Naive thymus-derived CD4-positive, alpha-beta T cell (primary cell): ENCODE measurements at regions of chr1 and their contacts with region 1.

Region 1: GRCh38 chr1:154791292-154792166 is 78.6 kb downstream of the KCNN3 start:
- DNase-seq: peak; percentile 46 to 94 (median 91)
- ATAC-seq: peak; percentile 99
- H3K4me3 ChIP-seq: peak overlapping the region; percentile 6
- H3K4me3 Mint-ChIP-seq: peak overlapping the region; percentile 63 to 83 (median 78)
- H3K27ac ChIP-seq: peak overlapping the region; percentile 38
- H3K27ac Mint-ChIP-seq: peak overlapping the region; percentile 59 to 95 (median 84)
- H3K4me1 ChIP-seq: peaks cover 22 to 23% of the 10 kb centered on the region in 2 donors
- H3K4me1 Mint-ChIP-seq: peaks cover 18 to 56% (median 40%) of the 10 kb centered on the region in 7 donors
- H3K27me3 ChIP-seq: no peaks in the 10 kb centered on the region
- H3K27me3 Mint-ChIP-seq: peaks cover 0 to 23% (median 0%) of the 10 kb centered on the region in 5 donors

Region 2: DNA sequence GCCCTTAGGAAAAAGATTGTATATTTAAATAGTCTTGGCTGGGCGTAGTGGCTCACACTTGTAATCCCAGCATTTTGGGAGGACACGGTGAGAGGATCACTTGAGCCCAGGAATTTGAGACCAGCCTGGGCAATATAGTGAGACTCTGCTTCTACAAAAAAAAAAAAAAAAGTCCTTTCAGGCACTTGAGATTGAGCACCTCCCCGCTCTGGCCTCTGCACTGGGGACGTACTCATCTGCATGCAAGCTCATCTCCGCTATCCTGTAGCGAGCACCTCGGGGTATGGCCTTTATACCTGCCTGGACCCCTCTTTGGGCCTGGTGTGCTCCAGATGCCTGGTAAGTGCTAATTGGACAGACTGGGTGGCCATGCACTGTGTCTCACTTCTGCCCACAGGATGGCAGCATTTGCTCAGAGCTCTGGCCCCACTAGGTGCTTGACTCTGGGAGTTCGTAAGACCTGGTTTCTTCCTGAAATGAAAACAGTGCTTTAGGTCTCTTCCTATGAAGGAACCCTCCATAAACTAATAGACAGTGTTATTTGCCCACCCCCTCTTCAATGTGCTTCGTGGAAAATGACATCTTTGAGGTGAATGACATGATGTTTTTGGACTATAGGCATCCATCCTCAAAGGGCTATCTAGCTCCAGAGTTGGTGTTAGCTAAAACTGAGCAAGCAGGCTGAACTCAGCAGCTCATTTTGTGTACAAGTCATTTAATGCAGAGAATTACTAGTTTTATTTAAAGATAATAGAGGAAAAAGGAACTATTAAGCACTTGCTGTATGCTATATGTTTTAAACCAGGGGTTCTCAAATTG is 121.9 kb before region 1 on chr1:
- CTCF ChIA-PET with region 1: interaction called, 19 read pairs
- POLR2A ChIA-PET with region 1: no interaction called
- intact Hi-C with region 1: loop called (anchors 1 kb)
- DNase-seq: peak; percentile 40 to 81 (median 73)
- ATAC-seq: peak; percentile 100
- H3K4me3 ChIP-seq: no peak overlapping the region
- H3K4me3 Mint-ChIP-seq: no peak overlapping the region
- H3K27ac ChIP-seq: no peak overlapping the region
- H3K27ac Mint-ChIP-seq: peak overlapping the region in 1 of 9 donors; percentile 30
- H3K4me1 ChIP-seq: no peaks in the 10 kb centered on the region
- H3K4me1 Mint-ChIP-seq: peaks cover 0 to 13% (median 5%) of the 10 kb centered on the region in 7 donors
- H3K27me3 ChIP-seq: no peaks in the 10 kb centered on the region
- H3K27me3 Mint-ChIP-seq: peaks cover 0 to 4% (median 0%) of the 10 kb centered on the region in 5 donors

Region 3: GRCh38 chr1:154760469-154760933 is 31.0 kb before region 1 on chr1:
- CTCF ChIA-PET with region 1: interaction called, 27 read pairs
- POLR2A ChIA-PET with region 1: interaction called, 6 read pairs
- intact Hi-C with region 1: loop called (anchors 1 kb)
- DNase-seq: peak; percentile 73 to 91 (median 83)
- ATAC-seq: peak; percentile 98
- H3K4me3 ChIP-seq: peak overlapping the region; percentile 47
- H3K4me3 Mint-ChIP-seq: peak overlapping the region; percentile 29 to 79 (median 74)
- H3K27ac ChIP-seq: peak overlapping the region; percentile 59
- H3K27ac Mint-ChIP-seq: peak overlapping the region in 5 of 9 donors; percentile 62 to 97 (median 79)
- H3K4me1 ChIP-seq: peaks cover 8 to 24% of the 10 kb centered on the region in 2 donors
- H3K4me1 Mint-ChIP-seq: peaks cover 24 to 47% (median 40%) of the 10 kb centered on the region in 7 donors
- H3K27me3 ChIP-seq: peaks cover 0 to 8% of the 10 kb centered on the region in 2 donors
- H3K27me3 Mint-ChIP-seq: peaks cover 0 to 23% (median 5%) of the 10 kb centered on the region in 5 donors

Region 4: GRCh38 chr1:154772606-154773506 is 18.7 kb before region 1 on chr1:
- CTCF ChIA-PET with region 1: interaction called, 13 read pairs
- POLR2A ChIA-PET with region 1: interaction called, 5 read pairs
- intact Hi-C with region 1: loop called in 1 of 2 experiments (anchors 1 kb)
- DNase-seq: peak in 2 of 9 donors; percentile 19 to 36
- ATAC-seq: no peak
- H3K4me3 ChIP-seq: no peak overlapping the region
- H3K4me3 Mint-ChIP-seq: no peak overlapping the region
- H3K27ac ChIP-seq: no peak overlapping the region
- H3K27ac Mint-ChIP-seq: peak overlapping the region in 1 of 9 donors; percentile 70
- H3K4me1 ChIP-seq: no peaks in the 10 kb centered on the region
- H3K4me1 Mint-ChIP-seq: peaks cover 0 to 7% (median 0%) of the 10 kb centered on the region in 7 donors
- H3K27me3 ChIP-seq: no peaks in the 10 kb centered on the region
- H3K27me3 Mint-ChIP-seq: peaks cover 0 to 3% (median 0%) of the 10 kb centered on the region in 5 donors

Region 5: GRCh38 chr1:154878371-154879022 is 87.0 kb after region 1 on chr1:
- CTCF ChIA-PET with region 1: interaction called, 5 read pairs
- POLR2A ChIA-PET with region 1: interaction called, 3 read pairs
- intact Hi-C with region 1: loop called in 1 of 2 experiments (anchors 1 kb)
- DNase-seq: peak; percentile 43 to 73 (median 60)
- ATAC-seq: peak; percentile 94
- H3K4me3 ChIP-seq: no peak overlapping the region
- H3K4me3 Mint-ChIP-seq: no peak overlapping the region
- H3K27ac ChIP-seq: no peak overlapping the region
- H3K27ac Mint-ChIP-seq: peak overlapping the region in 1 of 9 donors; percentile 56
- H3K4me1 ChIP-seq: no peaks in the 10 kb centered on the region
- H3K4me1 Mint-ChIP-seq: peaks cover 0 to 8% (median 0%) of the 10 kb centered on the region in 7 donors
- H3K27me3 ChIP-seq: no peaks in the 10 kb centered on the region
- H3K27me3 Mint-ChIP-seq: peaks cover 0 to 2% (median 0%) of the 10 kb centered on the region in 5 donors